KBM-7 (cell line): ENCODE measurements at regions of chr5 and their contacts with region 1.

Region 1: DNA sequence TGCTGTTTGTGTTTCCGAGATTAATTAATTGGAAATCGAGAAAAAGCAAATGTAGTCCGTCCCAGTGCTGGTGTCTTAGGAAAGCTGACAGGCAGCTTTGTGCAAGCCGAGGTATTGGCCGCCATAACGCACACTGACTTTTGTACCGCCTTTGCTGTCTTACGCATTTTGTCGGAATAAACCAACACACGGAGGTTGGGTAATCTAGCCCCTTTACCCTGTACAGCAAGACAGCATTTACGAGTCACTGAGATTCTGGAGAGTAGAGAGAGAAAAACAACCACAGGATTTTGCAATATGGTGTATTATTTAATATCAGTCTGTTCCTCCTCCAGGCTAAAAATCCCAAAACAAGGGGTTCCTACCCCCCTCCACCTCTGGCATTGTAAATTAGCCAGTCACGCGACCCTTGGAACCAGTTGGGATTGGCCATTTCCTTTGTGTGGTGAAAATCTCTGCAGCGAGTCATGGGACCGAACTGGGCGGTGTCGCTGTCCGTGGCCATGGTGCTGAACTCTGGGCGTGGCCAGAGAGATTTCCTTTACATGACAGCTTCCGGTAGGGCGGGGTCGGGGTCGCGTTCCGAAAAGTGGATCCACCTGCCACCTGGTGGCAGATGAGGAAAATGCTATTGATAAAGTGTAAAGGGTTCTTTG is 10.3 kb upstream of the PCDHB1 start:
- DNase-seq: peak; percentile 91

Region 2: GRCh38 chr5:140840978-140841959 is 199.6 kb before region 1 on chr5 and contains the start of gene PCDHA8:
- in situ Hi-C with region 1: no loop called
- DNase-seq: peak; percentile 9

Region 3: GRCh38 chr5:140868721-140869554 is 172.0 kb before region 1 on chr5 and contains the start of gene PCDHA11:
- in situ Hi-C with region 1: loop called (anchors 25 kb)
- DNase-seq: peak; percentile 50